GM12878 (cell line): ENCODE measurements at regions of chr4 and their contacts with region 1.

Region 1: GRCh38 chr4:7301846-7302630 is 109.7 kb downstream of the SORCS2 start:
- DNase-seq: no peak
- ATAC-seq: no peak
- H3K4me3 ChIP-seq: no peak overlapping the region
- H3K27ac ChIP-seq: no peak overlapping the region
- H3K4me1 ChIP-seq: no peaks in the 10 kb centered on the region
- H3K27me3 ChIP-seq: peaks cover 0 to 4% of the 10 kb centered on the region in 2 experiments; a peak in 2 of 4 replicates
- CTCF ChIP-seq: no peak
- EP300 ChIP-seq: no peak
- POLR2A ChIP-seq: no peak
- RAD21 ChIP-seq: no peak

Region 2: DNA sequence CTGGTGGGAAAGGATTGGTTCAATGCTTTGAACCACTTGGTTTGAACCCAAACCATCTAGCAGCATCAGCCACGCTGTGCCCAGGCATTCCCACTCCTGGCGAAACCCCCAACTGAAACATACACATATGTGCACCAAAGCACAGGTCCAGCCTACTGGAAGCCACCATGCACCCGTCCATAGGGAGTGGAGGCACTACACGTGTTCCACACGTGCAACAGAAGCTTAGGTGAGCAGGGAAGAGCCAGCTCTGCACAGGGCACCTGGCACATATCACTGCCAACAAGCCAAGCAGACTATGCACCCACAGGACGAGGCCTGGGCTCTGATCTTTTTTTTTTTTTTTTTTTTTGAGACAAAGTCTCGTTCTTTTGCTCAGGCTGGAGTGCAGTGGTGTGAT is 1211.9 kb after region 1 on chr4:
- CTCF ChIA-PET with region 1: no interaction called
- POLR2A ChIA-PET with region 1: interaction called, 10 read pairs
- RAD21 ChIA-PET with region 1: no interaction called
- SMC1A ChIA-PET with region 1: no interaction called
- in situ Hi-C with region 1: no loop called
- intact Hi-C with region 1: no loop called
- DNase-seq: no peak
- ATAC-seq: no peak
- H3K4me3 ChIP-seq: no peak overlapping the region
- H3K27ac ChIP-seq: no peak overlapping the region
- H3K4me1 ChIP-seq: no peaks in the 10 kb centered on the region
- H3K27me3 ChIP-seq: no peaks in the 10 kb centered on the region; a peak in 1 of 4 replicates
- CTCF ChIP-seq: no peak
- EP300 ChIP-seq: no peak
- POLR2A ChIP-seq: no peak
- RAD21 ChIP-seq: no peak